GM13976 (cell line): ENCODE measurements at regions of chr2 and their contacts with region 1.

Region 1: DNA sequence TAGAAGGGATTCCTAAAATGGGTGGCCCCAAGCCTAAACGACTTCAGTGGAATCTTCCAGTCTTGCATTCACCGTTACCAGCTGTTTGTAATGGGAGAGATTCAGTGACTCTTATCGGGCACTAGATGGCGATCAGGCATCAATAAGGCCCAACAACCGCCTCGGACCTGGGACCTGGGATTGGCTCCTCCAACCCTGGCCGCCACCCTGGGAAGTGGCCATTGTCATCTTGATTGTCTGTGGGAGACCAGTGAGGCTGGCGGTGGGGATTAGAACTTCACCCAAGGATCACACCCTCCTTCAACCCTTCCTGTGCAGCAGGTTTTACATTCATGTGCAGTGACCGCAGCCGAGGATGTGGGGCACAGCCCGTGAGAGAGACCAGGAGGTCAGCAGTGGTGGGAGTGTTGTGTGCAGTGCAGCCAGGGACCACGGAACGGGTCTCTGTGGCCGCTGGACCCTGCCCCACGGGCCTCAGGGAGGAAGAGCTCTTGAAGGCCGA is 85.3 kb downstream of the SPP2 start:
- DNase-seq: peak; percentile 71
- CTCF ChIP-seq: peak; percentile 44

Region 2: GRCh38 chr2:235106874-235107639 is 971.3 kb after region 1 on chr2:
- in situ Hi-C with region 1: loop called (anchors 25 kb)
- DNase-seq: peak; percentile 56
- CTCF ChIP-seq: no peak